ENCODE measurements at regions of chr4 and their contacts with region 1.

Region 1: GRCh38 chr4:169619959-169620879 is at the start of gene CLCN3:
- DNase-seq: peak; percentile 99
- ATAC-seq: peak; percentile 89
- total RNA-seq, gene CLCN3: 116 to 131 TPM

Region 2: GRCh38 chr4:169659716-169660670 is 39.8 kb after region 1 on chr4:
- intact Hi-C with region 1: loop called in 1 of 2 experiments (anchors 5 kb)
- DNase-seq: peak; percentile 57 to 88
- ATAC-seq: peak; percentile 84

Measured in left colon (tissue), 2 donors.